Caco-2 (cell line): ENCODE measurements at regions of chrX and their contacts with region 1.

Region 1: GRCh38 chrX:87299563-87300160 is 217.9 kb upstream of the KLHL4 start:
- DNase-seq: peak in 1 of 2 experiments; percentile 1
- H3K4me3 ChIP-seq: no peak overlapping the region
- H3K4me3 Mint-ChIP-seq: no peak overlapping the region
- H3K27ac Mint-ChIP-seq: no peak overlapping the region
- H3K4me1 ChIP-seq: no peaks in the 10 kb centered on the region
- H3K4me1 Mint-ChIP-seq: no peaks in the 10 kb centered on the region
- H3K27me3 ChIP-seq: no peaks in the 10 kb centered on the region
- H3K27me3 Mint-ChIP-seq: no peaks in the 10 kb centered on the region
- CTCF ChIP-seq: peak; percentile 28 to 39

Region 2: DNA sequence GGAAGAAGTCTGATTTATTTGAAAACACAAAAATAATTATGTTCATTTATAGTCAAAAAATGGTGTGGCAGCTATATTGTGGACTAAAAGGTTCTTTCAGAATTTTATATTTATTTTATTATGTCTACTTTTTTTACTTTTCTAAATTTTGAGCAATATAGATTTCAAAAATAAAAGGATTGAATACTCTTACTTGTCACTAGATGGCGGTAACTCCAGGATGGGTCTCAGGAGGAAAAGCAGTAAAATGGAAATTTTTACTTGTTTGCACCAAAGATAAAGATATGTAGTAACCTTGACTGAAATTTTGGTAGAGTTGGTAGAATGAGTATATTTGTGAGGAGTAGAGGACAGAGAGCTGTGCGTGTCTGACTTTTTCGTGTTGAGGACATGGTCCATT is 1165.9 kb before region 1 on chrX:
- CTCF ChIA-PET with region 1: no interaction called
- POLR2A ChIA-PET with region 1: no interaction called
- intact Hi-C with region 1: loop called (anchors 10 kb)
- DNase-seq: no peak
- H3K4me3 ChIP-seq: no peak overlapping the region
- H3K4me3 Mint-ChIP-seq: no peak overlapping the region
- H3K27ac Mint-ChIP-seq: no peak overlapping the region
- H3K4me1 ChIP-seq: no peaks in the 10 kb centered on the region
- H3K4me1 Mint-ChIP-seq: no peaks in the 10 kb centered on the region
- H3K27me3 ChIP-seq: no peaks in the 10 kb centered on the region
- H3K27me3 Mint-ChIP-seq: peaks cover 5% of the 10 kb centered on the region
- CTCF ChIP-seq: peak in 1 of 2 experiments; percentile 46

Region 3: DNA sequence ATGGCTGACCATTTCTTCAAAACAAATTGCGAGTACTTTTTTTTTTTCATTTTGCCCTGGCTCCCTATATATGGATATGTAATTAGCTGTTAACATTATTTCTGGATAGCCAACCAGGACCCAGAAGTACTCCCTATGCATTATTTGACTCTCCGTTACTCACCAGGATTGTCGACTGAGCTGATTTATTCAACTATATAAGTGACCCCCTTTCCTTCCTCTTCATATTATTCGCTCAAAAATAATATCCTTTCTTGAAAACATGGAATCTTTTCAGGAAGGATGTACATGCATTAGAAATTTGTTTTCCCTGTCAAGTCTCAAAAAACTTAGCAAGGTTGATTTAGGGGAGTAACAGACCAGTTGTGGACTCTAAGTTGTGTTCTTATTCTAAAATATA is 103.9 kb after region 1 on chrX:
- CTCF ChIA-PET with region 1: no interaction called
- POLR2A ChIA-PET with region 1: no interaction called
- intact Hi-C with region 1: no loop called
- DNase-seq: no peak
- H3K4me3 ChIP-seq: no peak overlapping the region
- H3K4me3 Mint-ChIP-seq: no peak overlapping the region
- H3K27ac Mint-ChIP-seq: no peak overlapping the region
- H3K4me1 ChIP-seq: no peaks in the 10 kb centered on the region
- H3K4me1 Mint-ChIP-seq: no peaks in the 10 kb centered on the region
- H3K27me3 ChIP-seq: no peaks in the 10 kb centered on the region
- H3K27me3 Mint-ChIP-seq: no peaks in the 10 kb centered on the region
- CTCF ChIP-seq: no peak